Tibial artery (tissue), 4 donors: ENCODE measurements at regions of chr11 and their contacts with region 1.

Region 1: DNA sequence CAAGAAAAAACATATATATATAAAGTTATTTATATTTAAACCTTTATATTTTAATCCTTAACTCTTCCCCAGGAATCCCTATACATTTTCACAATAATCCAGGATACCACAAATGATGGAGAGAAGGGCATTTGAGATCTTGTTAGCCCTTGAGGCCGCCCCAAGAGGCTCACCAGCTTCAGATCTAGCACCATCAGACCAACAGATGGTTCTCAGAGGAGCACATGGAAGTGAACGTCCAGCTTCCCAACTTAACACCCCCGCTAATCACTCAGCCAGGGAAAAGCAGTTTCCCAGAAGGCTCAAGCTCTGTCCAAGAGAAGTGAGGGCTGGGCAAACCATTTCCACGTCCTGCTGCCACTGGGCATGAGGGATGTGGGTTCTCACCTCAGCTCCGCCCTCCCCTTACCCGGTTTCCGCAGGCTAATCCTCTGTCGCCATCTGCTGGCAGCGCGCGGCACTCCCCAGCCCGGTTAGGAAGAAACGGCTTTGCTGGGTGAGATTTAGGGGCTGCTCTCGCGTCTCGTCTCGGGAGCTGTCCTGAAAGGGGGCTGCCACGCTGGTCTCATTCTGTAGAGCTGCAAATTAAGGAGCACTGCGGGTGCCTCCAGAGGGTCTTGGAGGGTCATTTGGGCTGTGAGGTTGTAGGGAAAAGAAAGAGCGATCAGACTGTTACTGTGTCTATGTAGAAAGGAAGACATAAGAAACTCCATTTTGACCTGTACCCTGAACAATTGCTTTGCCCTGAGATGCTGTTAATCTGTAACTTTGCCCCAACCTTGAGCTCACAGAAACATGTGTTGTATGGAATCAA is 6.8 kb upstream of the FAM111A start:
- DNase-seq: peak; percentile 79 to 82
- H3K4me3 ChIP-seq: no peak overlapping the region
- H3K27ac ChIP-seq: no peak overlapping the region
- H3K4me1 ChIP-seq: peaks cover 0 to 6% (median 0%) of the 10 kb centered on the region in 4 donors
- H3K27me3 ChIP-seq: no peaks in the 10 kb centered on the region
- CTCF ChIP-seq: peak; percentile 91 to 99

Region 2: GRCh38 chr11:58654079-58654907 is 481.6 kb before region 1 on chr11:
- intact Hi-C with region 1: loop called (anchors 10 kb)
- DNase-seq: peak; percentile 76 to 80
- H3K4me3 ChIP-seq: no peak overlapping the region
- H3K27ac ChIP-seq: no peak overlapping the region
- H3K4me1 ChIP-seq: peaks cover 0 to 11% (median 0%) of the 10 kb centered on the region in 4 donors
- H3K27me3 ChIP-seq: no peaks in the 10 kb centered on the region
- CTCF ChIP-seq: peak; percentile 69 to 81

Region 3: DNA sequence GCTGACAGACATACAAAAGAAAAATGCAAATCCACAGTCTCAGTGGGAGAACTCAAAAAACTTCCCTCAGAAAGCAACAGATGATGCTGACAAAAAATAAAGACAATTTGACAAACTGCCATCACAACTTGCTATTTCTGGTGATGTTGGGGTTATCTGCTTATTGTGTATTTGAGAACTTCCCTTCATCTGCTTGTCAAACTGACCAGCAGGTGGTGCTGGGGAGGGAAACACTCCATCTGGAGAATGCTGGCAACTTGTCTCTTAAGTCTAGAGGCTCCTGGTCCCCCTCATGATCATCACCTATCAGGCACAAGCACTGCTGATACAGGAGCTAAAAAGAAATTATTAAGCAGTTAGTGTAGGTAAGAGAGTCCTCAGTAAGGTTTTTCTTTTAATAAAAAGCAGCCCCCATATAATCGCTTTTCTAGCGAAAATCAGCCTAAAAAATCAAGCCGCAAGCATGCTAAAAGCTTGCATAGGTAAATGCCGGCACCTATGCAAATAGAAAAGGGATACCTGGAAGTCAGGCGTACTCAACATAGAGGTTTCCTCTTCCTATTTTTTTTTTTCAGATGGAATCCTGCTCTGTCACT is 38.6 kb before region 1 on chr11:
- intact Hi-C with region 1: loop called (anchors 5 kb)
- DNase-seq: peak; percentile 61 to 66
- H3K4me3 ChIP-seq: no peak overlapping the region
- H3K27ac ChIP-seq: no peak overlapping the region
- H3K4me1 ChIP-seq: peaks cover 0 to 8% (median 3%) of the 10 kb centered on the region in 4 donors
- H3K27me3 ChIP-seq: peaks cover 0 to 13% of the 10 kb centered on the region in 2 donors
- CTCF ChIP-seq: peak; percentile 43 to 52